Panc1 (cell line): ENCODE measurements at regions of chr7 and their contacts with region 1.

Region 1: GRCh38 chr7:101128040-101128794 is 1.3 kb downstream of the SERPINE1 start:
- DNase-seq: no peak
- ATAC-seq: peak; percentile 3; the same call in 1 of the 2 replicates
- H3K4me3 ChIP-seq: peak overlapping the region; percentile 51 to 90
- H3K27ac ChIP-seq: peak overlapping the region; percentile 98
- H3K4me1 ChIP-seq: peaks cover 50% of the 10 kb centered on the region
- H3K27me3 ChIP-seq: no peaks in the 10 kb centered on the region
- CTCF ChIP-seq: no peak

Region 2: GRCh38 chr7:100793806-100794660 is 334.2 kb before region 1 on chr7:
- CTCF ChIA-PET with region 1: no interaction called
- POLR2A ChIA-PET with region 1: no interaction called
- in situ Hi-C with region 1: no loop called
- intact Hi-C with region 1: no loop called
- DNase-seq: no peak
- ATAC-seq: peak; percentile 70
- H3K4me3 ChIP-seq: peak overlapping the region in 1 of 2 experiments; percentile 5; a peak in 2 of 4 replicates
- H3K27ac ChIP-seq: peak overlapping the region; percentile 70
- H3K4me1 ChIP-seq: peaks cover 14% of the 10 kb centered on the region
- H3K27me3 ChIP-seq: no peaks in the 10 kb centered on the region
- CTCF ChIP-seq: no peak

Region 3: DNA sequence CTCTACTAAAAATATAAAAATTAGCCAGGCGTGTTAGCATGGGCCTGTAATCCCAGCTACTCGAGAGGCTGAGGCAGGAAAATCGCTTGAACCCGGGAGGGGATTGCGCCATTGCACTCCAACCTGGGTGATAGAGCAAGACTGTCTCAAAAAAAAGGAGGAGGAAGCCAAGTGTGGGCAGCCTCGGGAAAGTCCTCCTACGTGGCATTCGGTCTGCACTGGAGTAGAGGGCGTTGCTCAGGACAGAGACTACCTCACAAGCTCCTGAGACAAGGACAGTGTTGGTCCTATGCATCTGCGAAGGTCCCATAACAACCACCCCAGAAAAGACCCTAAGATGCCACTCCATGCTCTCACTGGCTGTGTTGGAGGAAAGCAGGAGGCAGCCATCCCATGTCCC is 11.3 kb before region 1 on chr7:
- CTCF ChIA-PET with region 1: interaction called, 5 read pairs
- POLR2A ChIA-PET with region 1: interaction called, 13 read pairs
- in situ Hi-C with region 1: no loop called
- intact Hi-C with region 1: no loop called
- DNase-seq: no peak
- ATAC-seq: peak; percentile 54
- H3K4me3 ChIP-seq: no peak overlapping the region
- H3K27ac ChIP-seq: peak overlapping the region; percentile 91
- H3K4me1 ChIP-seq: peaks cover 55% of the 10 kb centered on the region
- H3K27me3 ChIP-seq: no peaks in the 10 kb centered on the region
- CTCF ChIP-seq: no peak

Region 4: DNA sequence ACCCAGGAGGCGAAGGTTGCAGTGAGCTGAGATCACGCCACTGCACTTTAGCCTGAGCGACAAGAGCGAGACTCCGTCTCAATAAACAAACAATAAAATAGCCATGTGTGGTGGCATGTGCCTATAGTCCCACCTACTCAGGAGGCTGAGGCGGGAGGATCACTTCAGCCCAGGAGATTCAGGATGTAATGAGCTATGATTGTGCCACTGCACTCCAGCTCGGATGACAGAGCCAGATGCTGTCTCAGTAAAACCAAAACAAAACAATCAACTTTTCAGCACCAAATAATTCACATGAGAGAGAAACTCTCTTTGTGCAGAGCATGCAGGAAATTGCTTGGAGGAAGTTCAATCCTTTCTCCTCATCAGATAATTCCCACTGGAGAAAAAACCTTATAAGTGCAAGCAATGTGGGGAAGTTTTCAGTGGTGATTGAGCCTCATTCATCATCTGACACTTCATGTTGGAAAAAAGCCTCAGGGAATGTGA is 130.1 kb after region 1 on chr7:
- CTCF ChIA-PET with region 1: no interaction called
- POLR2A ChIA-PET with region 1: no interaction called
- in situ Hi-C with region 1: no loop called
- intact Hi-C with region 1: no loop called
- DNase-seq: no peak
- ATAC-seq: no peak
- H3K4me3 ChIP-seq: no peak overlapping the region
- H3K27ac ChIP-seq: no peak overlapping the region
- H3K4me1 ChIP-seq: no peaks in the 10 kb centered on the region
- H3K27me3 ChIP-seq: no peaks in the 10 kb centered on the region
- CTCF ChIP-seq: no peak

Region 5: GRCh38 chr7:101420436-101420835 is 292.2 kb after region 1 on chr7:
- CTCF ChIA-PET with region 1: no interaction called
- POLR2A ChIA-PET with region 1: interaction called, 10 read pairs
- in situ Hi-C with region 1: no loop called
- intact Hi-C with region 1: no loop called
- DNase-seq: no peak
- ATAC-seq: peak; percentile 58
- H3K4me3 ChIP-seq: no peak overlapping the region
- H3K27ac ChIP-seq: no peak overlapping the region
- H3K4me1 ChIP-seq: no peaks in the 10 kb centered on the region
- H3K27me3 ChIP-seq: no peaks in the 10 kb centered on the region
- CTCF ChIP-seq: no peak

Region 6: GRCh38 chr7:101644879-101645278 is 516.7 kb after region 1 on chr7:
- CTCF ChIA-PET with region 1: no interaction called
- POLR2A ChIA-PET with region 1: no interaction called
- in situ Hi-C with region 1: no loop called
- intact Hi-C with region 1: no loop called
- DNase-seq: no peak
- ATAC-seq: peak; percentile 64
- H3K4me3 ChIP-seq: peak overlapping the region in 1 of 2 experiments; percentile 31; a peak in 2 of 4 replicates
- H3K27ac ChIP-seq: no peak overlapping the region
- H3K4me1 ChIP-seq: peaks cover 7% of the 10 kb centered on the region
- H3K27me3 ChIP-seq: no peaks in the 10 kb centered on the region
- CTCF ChIP-seq: no peak

Region 7: GRCh38 chr7:102169651-102170392 is 1041.6 kb after region 1 on chr7:
- CTCF ChIA-PET with region 1: no interaction called
- POLR2A ChIA-PET with region 1: no interaction called
- in situ Hi-C with region 1: no loop called
- intact Hi-C with region 1: no loop called
- DNase-seq: no peak
- ATAC-seq: no peak
- H3K4me3 ChIP-seq: no peak overlapping the region
- H3K27ac ChIP-seq: no peak overlapping the region
- H3K4me1 ChIP-seq: no peaks in the 10 kb centered on the region
- H3K27me3 ChIP-seq: no peaks in the 10 kb centered on the region
- CTCF ChIP-seq: no peak